GM10248 (cell line): ENCODE measurements at regions of chr1 and their contacts with region 1.

Region 1: DNA sequence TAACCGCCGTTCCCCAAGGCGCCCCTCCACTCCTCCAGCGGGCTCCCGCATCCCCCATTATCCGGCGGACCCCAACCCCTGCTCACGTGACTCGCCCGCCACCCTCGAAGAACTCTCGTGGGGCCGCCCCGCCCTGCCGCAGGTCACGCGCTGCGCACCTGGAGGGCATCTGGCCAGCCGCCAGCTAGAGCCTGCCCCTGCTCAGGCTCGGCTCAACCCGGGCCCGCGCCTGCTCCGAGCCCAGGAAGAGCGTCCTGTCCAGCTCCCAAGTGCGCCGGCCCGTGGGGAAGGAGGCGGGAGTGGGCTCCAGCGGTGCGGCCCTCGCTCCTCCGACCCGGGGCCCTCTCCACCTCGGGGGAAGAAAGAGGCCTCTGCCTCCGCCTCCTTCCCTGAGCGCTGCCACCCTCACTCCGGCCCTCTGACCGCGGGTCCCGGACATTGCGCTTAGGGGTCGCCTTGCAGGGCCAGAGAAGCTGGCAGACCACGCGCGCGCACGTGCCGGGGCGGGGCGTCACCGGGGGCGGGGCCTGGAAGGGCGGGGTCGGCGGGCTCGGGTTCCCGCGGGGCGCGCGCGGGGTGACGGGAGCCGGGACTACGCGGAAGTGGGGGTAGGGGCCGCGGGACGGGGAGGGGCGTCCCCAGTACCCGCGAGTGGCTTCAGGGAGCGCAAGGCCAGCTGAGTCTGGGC is 28.4 kb downstream of the HMGN2 start:
- DNase-seq: peak; percentile 96
- CTCF ChIP-seq: no peak

Region 2: DNA sequence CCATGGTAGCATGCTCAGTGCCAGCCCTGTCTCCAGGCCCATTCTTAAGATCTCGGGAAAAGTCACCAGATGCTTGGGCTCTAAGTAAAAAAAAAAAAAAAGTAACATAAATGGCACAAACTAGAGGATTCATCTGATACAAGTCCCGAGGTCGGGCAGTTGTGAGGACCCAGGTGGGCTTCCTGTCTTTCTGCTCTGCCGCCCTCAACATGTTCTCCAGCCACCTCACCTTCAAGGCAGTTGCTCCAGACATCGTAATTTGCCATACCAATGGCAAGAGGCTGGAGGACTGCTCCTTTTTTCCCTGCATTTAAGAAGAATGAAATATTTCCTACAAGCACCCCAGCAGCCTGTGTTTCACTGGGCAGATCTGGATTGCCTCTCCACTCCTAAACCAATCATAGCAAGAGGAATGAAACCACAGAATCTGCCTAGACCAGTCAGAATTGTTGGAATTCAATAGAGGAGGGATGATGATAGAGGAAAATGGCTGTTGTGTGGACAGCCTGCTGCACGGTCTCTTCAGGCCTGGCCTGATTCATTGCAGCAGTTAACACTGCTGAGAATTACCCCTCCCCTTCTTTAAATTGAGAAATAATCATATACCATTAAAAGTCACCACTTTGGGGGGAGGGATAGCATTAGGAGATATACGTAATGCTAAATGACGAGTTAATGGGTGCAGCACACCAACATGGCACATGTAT is 23.0 kb before region 1 on chr1:
- CTCF ChIA-PET with region 1: interaction called, 12 read pairs
- POLR2A ChIA-PET with region 1: interaction called, 4 read pairs
- DNase-seq: no peak
- CTCF ChIP-seq: no peak

Region 3: GRCh38 chr1:26490158-26490557 is 10.5 kb before region 1 on chr1:
- CTCF ChIA-PET with region 1: interaction called, 26 read pairs
- POLR2A ChIA-PET with region 1: no interaction called
- DNase-seq: no peak
- CTCF ChIP-seq: no peak

Region 4: GRCh38 chr1:26524181-26524580 is 23.5 kb after region 1 on chr1:
- CTCF ChIA-PET with region 1: interaction called, 47 read pairs
- POLR2A ChIA-PET with region 1: no interaction called
- DNase-seq: no peak
- CTCF ChIP-seq: no peak

Region 5: GRCh38 chr1:26541816-26542711 is 41.4 kb after region 1 on chr1:
- CTCF ChIA-PET with region 1: interaction called, 49 read pairs
- POLR2A ChIA-PET with region 1: no interaction called
- DNase-seq: peak; percentile 91
- CTCF ChIP-seq: peak; percentile 40